ENCODE measurements at regions of chr7 and their contacts with region 1.

Region 1: DNA sequence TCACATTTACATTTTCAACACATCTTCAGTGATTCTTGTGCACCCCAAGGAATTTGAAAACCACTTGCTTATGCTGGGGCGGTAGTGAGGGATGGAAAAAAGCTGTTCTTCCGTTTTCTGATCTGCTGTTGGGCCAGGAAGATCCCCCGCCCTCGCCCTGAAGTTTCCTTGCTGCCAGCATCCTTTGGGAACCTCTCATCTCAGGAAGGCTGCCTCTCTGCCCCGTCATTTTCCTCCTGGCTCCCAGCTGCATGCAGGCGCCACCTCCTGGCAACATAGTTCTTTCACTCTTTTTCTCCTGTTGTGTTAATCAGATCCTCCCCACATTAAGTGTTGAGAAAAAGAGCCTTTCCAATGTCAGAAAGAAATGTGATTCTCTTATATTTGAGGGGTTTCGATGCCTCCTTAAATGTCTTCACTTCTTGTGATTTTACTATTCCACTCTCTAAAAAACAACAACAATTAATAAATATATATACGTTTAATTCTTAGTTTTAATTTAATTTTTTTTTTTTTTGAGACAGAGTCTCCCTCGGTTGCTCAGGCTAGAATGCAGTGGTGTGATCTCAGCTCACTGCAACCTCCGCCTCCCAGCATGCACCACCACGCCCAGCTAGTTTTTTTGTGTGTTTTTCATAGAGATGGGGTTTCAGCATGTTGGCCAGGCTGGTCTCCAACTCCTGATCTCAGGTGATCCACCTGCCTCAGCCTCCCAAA is 122.9 kb downstream of the RALA start:
- DNase-seq: peak; percentile 89
- H3K4me3 ChIP-seq: no peak overlapping the region
- H3K27ac ChIP-seq: peak overlapping the region in 1 of 2 experiments; percentile 43; a peak in 1 of 4 replicates
- H3K4me1 ChIP-seq: peaks cover 0 to 9% of the 10 kb centered on the region in 2 experiments; a peak in 2 of 4 replicates
- H3K27me3 ChIP-seq: no peaks in the 10 kb centered on the region
- CTCF ChIP-seq: peak; percentile 98
- EP300 ChIP-seq: no peak
- RAD21 ChIP-seq: peak; percentile 97

Region 2: GRCh38 chr7:39197831-39198230 is 548.4 kb before region 1 on chr7:
- CTCF ChIA-PET with region 1: no interaction called
- POLR2A ChIA-PET with region 1: no interaction called
- DNase-seq: no peak
- H3K4me3 ChIP-seq: no peak overlapping the region
- H3K27ac ChIP-seq: no peak overlapping the region
- H3K4me1 ChIP-seq: no peaks in the 10 kb centered on the region
- H3K27me3 ChIP-seq: peaks cover 22% of the 10 kb centered on the region; the same call in 1 of the 2 replicates
- CTCF ChIP-seq: no peak
- EP300 ChIP-seq: no peak
- RAD21 ChIP-seq: no peak

Region 3: DNA sequence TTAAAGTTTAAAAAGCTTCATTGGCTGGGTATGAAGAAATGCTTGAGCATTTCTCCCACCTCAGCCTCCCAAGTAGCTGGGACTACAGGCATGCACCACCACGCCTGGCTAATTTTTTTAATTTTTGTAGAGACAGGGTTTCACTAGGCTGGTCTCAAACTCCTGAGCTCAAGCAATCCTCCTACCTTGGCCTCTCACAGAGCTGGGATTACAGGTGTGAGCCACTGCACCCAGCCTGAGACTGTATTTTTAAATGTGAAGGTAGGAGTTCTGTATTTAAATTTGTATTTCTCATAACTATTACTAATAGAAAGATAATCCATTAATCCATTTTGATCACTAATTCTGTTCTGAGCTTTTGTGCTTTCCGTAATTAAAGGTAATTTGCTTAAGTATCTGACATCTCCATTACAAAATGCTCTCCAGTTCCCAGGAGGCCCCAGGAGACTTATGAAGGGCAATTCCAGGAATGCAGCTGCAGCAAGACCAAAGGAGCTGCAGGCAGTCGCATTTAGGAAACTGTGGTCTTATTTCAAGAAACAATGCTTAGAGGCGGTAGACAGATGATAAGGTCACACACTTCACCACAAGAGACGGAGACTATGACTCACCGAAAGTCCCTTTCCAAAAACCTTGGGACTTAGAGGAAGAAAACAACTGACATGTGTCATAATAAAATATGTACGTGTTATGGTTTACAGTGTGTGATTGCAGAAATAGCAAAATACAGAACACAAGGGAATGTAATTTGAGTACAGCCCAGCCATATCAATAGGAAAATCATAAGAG is 156.7 kb before region 1 on chr7:
- CTCF ChIA-PET with region 1: interaction called, 11 read pairs
- POLR2A ChIA-PET with region 1: no interaction called
- DNase-seq: no peak
- H3K4me3 ChIP-seq: no peak overlapping the region; a peak in 1 of 4 replicates
- H3K27ac ChIP-seq: peak overlapping the region; percentile 16 to 95; a peak in 3 of 4 replicates
- H3K4me1 ChIP-seq: peaks cover 0 to 11% of the 10 kb centered on the region in 2 experiments; a peak in 2 of 4 replicates
- H3K27me3 ChIP-seq: no peaks in the 10 kb centered on the region
- CTCF ChIP-seq: no peak
- EP300 ChIP-seq: peak in 1 of 2 experiments; percentile 83; a peak in 2 of 4 replicates
- RAD21 ChIP-seq: no peak

Region 4: GRCh38 chr7:39623018-39623731 is 123.1 kb before region 1 on chr7 and contains the start of gene RALA:
- CTCF ChIA-PET with region 1: interaction called, 10 read pairs
- POLR2A ChIA-PET with region 1: interaction called, 5 read pairs
- DNase-seq: peak; percentile 99
- H3K4me3 ChIP-seq: peak within 1 kb of the TSS; percentile 93 to 98
- H3K27ac ChIP-seq: peak within 1 kb of the TSS; percentile 93 to 98
- H3K4me1 ChIP-seq: peaks cover 29 to 38% of the 10 kb centered on the region in 2 experiments; a peak in 3 of 4 replicates
- H3K27me3 ChIP-seq: no peaks in the 10 kb centered on the region
- CTCF ChIP-seq: no peak
- EP300 ChIP-seq: peak in 1 of 2 experiments; percentile 27; a peak in 1 of 4 replicates
- RAD21 ChIP-seq: no peak
- polyA plus RNA-seq, gene RALA: 29.0 and 37.4 TPM in 2 replicates

Region 5: DNA sequence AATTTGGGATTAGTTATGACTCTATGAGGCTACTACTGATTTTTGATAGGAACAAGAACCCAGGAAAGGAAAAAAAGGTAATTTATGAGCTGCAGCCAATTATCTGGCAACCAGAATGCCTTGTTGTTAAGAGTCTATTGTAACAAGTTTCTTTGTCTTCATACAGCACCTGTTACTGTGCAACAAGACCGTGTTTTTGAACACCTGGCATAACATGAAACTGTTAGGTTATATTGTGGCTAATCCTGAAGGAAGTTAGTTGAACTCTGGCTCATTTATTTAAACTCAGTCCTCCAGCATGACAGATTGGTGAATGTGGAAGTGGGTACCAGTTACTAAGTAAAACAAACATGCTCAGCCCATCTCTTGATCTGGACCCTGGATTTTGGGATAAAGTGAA is 89.8 kb before region 1 on chr7:
- CTCF ChIA-PET with region 1: no interaction called
- POLR2A ChIA-PET with region 1: no interaction called
- DNase-seq: no peak
- H3K4me3 ChIP-seq: no peak overlapping the region
- H3K27ac ChIP-seq: no peak overlapping the region
- H3K4me1 ChIP-seq: peaks cover 0 to 5% of the 10 kb centered on the region in 2 experiments; a peak in 1 of 4 replicates
- H3K27me3 ChIP-seq: no peaks in the 10 kb centered on the region
- CTCF ChIP-seq: no peak
- EP300 ChIP-seq: no peak
- RAD21 ChIP-seq: no peak

Region 6: DNA sequence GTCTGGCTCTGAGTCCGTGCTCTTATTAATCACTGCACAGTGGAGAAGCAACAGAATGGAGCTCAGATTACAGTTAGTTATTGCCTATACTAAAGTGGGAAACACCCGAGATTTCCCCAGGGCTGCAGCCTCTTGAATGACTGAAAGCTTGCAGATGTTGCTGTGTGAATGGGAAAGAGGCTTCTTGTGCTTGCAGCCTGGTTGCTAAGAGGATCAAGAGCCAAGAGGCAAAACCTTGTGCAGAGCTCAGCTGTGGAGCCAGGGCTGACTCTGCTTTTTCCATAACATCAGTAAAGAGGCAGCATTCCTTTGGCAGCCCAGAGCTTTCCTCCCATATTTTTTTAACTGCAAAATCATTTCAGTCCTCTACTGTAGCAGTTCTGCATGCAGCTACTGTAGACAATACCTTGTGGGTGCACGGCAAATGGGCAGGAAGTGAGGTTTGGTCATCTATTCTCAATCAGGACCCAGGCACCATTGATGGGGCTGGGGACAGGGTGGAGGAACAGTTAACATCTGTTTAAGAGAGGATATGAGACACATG is 36.4 kb before region 1 on chr7:
- CTCF ChIA-PET with region 1: interaction called, 13 read pairs
- POLR2A ChIA-PET with region 1: no interaction called
- DNase-seq: no peak
- H3K4me3 ChIP-seq: no peak overlapping the region
- H3K27ac ChIP-seq: peak overlapping the region in 1 of 2 experiments; percentile 12; a peak in 1 of 4 replicates
- H3K4me1 ChIP-seq: peaks cover 0 to 5% of the 10 kb centered on the region in 2 experiments; a peak in 1 of 4 replicates
- H3K27me3 ChIP-seq: no peaks in the 10 kb centered on the region
- CTCF ChIP-seq: no peak
- EP300 ChIP-seq: no peak
- RAD21 ChIP-seq: no peak

Region 7: GRCh38 chr7:39732837-39733804 is 13.1 kb before region 1 on chr7:
- CTCF ChIA-PET with region 1: interaction called, 52 read pairs
- POLR2A ChIA-PET with region 1: interaction called, 3 read pairs
- DNase-seq: peak; percentile 95
- H3K4me3 ChIP-seq: peak overlapping the region; percentile 62 to 70
- H3K27ac ChIP-seq: peak overlapping the region; percentile 91 to 98
- H3K4me1 ChIP-seq: peaks cover 11 to 20% of the 10 kb centered on the region in 2 experiments; a peak in 3 of 4 replicates
- H3K27me3 ChIP-seq: no peaks in the 10 kb centered on the region
- CTCF ChIP-seq: no peak
- EP300 ChIP-seq: no peak; a peak in 1 of 4 replicates
- RAD21 ChIP-seq: no peak

Region 8: GRCh38 chr7:40041456-40041855 is 295.2 kb after region 1 on chr7:
- CTCF ChIA-PET with region 1: no interaction called
- POLR2A ChIA-PET with region 1: no interaction called
- DNase-seq: no peak
- H3K4me3 ChIP-seq: no peak overlapping the region
- H3K27ac ChIP-seq: no peak overlapping the region
- H3K4me1 ChIP-seq: no peaks in the 10 kb centered on the region
- H3K27me3 ChIP-seq: no peaks in the 10 kb centered on the region
- CTCF ChIP-seq: no peak
- EP300 ChIP-seq: no peak
- RAD21 ChIP-seq: no peak